Natural killer cell (primary cell): ENCODE measurements at regions of chr3 and their contacts with region 1.

Region 1: GRCh38 chr3:195204360-195205163 is 66.4 kb downstream of the XXYLT1 start:
- DNase-seq: peak; percentile 18 to 25
- ATAC-seq: peak; percentile 47 to 57 (median 54)
- H3K4me3 ChIP-seq: no peak overlapping the region
- H3K4me3 Mint-ChIP-seq: peak overlapping the region; percentile 94
- H3K27ac ChIP-seq: peak overlapping the region; percentile 74
- H3K27ac Mint-ChIP-seq: peak overlapping the region; percentile 89 to 94
- H3K4me1 ChIP-seq: peaks cover 26% of the 10 kb centered on the region
- H3K4me1 Mint-ChIP-seq: peaks cover 29 to 35% of the 10 kb centered on the region in 2 donors
- H3K27me3 ChIP-seq: no peaks in the 10 kb centered on the region
- H3K27me3 Mint-ChIP-seq: peaks cover 0 to 2% of the 10 kb centered on the region in 2 donors
- CTCF ChIP-seq: no peak

Region 2: DNA sequence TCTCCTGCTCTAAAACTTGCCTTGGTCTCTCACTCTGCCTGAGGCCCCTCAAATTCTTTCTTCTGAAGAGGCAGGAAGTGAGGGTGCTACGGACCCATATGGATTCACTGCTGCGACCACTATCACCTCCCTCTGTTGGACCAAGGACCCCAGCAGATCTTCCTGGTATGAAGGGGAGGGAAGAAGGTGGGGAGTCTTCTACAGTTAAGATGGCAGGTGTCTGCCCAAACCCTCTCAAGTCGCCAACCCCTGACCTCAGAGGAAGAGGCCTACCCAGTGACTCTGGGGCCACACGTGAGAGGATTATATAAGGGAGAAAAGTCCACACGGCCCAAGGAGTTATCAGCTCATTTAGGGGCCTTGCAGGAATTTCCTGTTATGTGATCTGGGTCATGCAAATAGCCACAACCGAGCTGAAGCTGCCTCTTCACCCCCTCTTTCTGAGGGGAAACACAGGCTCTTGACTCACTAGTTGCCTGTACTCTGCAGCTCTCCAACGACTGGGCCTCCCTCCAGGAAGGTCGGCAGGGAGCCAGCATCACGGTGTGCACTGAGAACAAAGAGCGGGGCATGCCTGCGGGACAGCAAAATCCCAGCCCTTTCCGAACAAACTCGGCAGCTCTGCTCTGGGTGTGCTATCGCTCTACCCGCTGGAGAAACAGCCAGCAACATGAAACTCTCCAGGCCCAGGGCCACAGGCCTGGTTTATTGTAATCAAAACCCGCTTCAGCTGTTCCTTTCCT is 49.6 kb before region 1 on chr3:
- intact Hi-C with region 1: loop called (anchors 5 kb)
- DNase-seq: no peak
- ATAC-seq: peak; percentile 58 to 78 (median 65)
- H3K4me3 ChIP-seq: no peak overlapping the region
- H3K4me3 Mint-ChIP-seq: no peak overlapping the region
- H3K27ac ChIP-seq: peak overlapping the region; percentile 27
- H3K27ac Mint-ChIP-seq: peak overlapping the region; percentile 75 to 90
- H3K4me1 ChIP-seq: peaks cover 41% of the 10 kb centered on the region
- H3K4me1 Mint-ChIP-seq: peaks cover 22 to 34% of the 10 kb centered on the region in 2 donors
- H3K27me3 ChIP-seq: no peaks in the 10 kb centered on the region
- H3K27me3 Mint-ChIP-seq: no peaks in the 10 kb centered on the region
- CTCF ChIP-seq: no peak